Left cardiac atrium (tissue), 4 donors: ENCODE measurements at regions of chr2 and their contacts with region 1.

Region 1: DNA sequence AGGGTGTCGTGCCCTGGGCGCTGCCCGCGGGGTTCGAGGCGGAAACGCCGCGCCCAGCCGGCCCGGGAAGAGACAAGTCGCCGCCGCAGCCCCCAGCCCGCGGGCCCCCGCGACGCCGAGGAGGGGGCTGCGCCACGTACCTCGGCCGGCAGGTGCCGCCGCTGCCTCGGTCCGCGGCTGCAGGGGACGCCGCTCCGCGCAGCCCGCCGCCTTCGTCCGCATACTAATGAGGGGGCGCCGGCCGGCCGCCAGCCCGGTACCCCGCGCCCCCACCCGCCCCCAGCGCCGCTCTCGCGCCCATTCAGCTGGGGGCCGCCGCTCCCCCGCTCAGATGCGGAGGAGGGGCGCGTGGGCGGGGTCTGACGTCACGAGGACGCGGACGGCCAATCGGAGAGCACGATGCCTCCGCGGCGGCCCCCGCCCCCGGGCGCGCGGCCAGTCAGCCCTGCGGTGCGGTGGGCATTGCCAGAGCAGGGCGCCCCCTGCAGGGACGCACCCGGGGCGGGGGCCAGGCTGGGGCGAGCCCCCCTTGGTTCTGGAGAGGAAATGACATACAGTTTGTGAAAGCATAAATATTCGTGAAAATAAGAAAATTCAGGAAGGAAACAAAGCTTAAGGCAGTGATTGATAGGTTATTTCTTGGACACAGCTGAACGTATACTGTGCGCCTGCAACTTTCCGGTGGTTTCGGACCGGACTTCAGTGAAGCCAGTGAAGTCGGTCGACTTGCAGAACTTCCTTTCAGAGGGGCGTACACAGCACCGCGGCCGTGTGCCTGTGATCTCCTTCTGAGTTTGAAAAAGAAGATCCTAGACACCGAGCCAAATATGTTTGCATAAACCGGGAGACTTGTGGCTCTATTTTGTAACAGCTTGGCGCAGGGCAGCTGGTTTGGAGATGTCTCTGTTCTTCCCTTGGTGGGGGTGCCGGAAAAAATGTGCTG is at the start of gene ST3GAL5:
- DNase-seq: peak; percentile 94
- ATAC-seq: peak; percentile 81 to 93
- total RNA-seq, gene ST3GAL5: 10.6 to 12.5 TPM

Region 2: GRCh38 chr2:85826990-85827878 is 61.7 kb before region 1 on chr2:
- intact Hi-C with region 1: loop called in 1 of 2 experiments (anchors 5 kb)
- DNase-seq: peak; percentile 82
- ATAC-seq: peak; percentile 92 to 94

Region 3: DNA sequence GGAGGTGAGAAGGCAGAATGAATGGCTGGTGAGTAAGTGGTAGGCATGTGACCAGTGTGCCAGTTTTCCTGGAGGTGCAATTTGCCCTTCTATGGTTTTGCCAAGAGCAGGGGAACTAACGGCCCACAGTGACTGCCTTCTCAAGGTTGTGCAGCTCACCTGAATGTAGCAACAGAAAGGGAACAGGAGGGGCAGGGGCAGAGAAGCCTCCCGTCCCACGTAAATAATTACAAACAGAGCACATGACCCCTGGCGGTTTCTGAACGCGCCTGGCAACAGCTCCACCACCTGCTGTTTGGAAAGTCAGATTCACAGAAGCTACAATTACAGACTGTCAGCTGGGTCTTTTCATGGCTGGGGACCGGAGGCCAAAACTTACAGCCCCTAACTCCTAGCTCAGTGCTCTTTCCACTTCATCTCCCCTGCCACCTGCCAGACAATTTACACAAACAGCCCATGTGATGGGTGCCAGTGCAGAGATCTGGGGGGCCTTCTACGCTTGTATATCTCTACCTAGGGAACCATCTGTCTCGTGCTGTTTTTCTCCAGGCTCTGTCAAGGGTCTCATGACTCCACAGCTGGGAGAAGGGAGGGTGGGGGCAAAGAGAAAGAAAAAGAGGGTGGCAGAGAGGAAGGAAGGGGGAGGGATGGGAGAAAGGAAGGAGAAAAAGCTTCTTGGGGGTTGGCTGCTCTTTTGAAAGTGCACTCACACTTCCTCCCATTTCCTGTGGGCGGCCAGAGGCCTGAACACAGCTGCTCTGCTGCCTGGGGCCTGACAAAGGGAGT is 147.1 kb after region 1 on chr2:
- intact Hi-C with region 1: loop called in 1 of 2 experiments (anchors 5 kb)
- DNase-seq: peak; percentile 79
- ATAC-seq: peak; percentile 69 to 84

Region 4: GRCh38 chr2:86072271-86072858 is 183.4 kb after region 1 on chr2:
- intact Hi-C with region 1: loop called (anchors 5 kb)
- DNase-seq: peak; percentile 87
- ATAC-seq: peak; percentile 89 to 91

Region 5: DNA sequence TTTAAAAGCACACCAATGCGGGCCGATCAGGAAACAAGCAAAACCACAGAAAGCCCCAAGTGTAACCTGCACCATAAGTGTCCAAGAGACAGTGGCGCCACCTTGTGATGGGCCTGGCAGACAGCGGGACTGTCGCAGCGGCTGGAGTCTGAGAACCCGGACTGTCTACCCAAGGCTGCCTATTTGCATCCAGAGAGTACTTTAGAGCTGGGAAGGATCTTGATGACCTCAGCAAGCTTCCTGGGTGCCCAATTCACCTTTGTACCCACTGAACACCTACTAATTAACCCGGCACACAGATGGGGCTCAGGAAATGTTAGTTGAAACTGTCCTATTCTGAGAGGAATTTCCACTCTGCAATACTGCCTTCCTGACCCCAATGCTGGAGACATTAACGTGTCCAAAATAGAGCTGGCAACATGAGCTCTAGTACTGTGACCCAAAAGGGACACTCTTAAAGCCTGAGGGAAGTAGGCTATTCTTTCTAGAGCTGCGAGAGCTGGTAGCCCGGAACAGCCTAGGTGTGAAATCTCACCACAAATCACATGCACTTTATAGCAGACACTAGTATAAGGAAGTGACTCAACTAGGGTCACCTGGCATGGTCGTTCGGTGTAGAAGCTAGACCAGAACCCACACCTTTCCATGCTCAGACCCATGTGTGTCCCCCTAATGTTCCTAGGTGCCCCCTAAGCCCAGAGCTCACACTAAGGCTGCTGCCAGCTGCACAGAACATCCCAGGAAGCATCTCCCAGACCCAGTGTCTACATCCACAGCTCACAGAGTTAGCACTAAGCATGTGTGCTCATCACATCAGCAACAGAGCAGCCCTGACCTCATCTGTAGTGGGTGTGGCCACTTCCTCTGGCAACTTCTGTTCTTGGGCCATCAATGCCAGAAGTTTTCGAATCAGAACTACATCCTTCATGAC is 191.3 kb after region 1 on chr2:
- intact Hi-C with region 1: loop called in 1 of 2 experiments (anchors 5 kb)
- DNase-seq: peak; percentile 84
- ATAC-seq: peak; percentile 88 to 89